Tibial artery (tissue), 4 donors: ENCODE measurements at regions of chr13 and their contacts with region 1.

Region 1: DNA sequence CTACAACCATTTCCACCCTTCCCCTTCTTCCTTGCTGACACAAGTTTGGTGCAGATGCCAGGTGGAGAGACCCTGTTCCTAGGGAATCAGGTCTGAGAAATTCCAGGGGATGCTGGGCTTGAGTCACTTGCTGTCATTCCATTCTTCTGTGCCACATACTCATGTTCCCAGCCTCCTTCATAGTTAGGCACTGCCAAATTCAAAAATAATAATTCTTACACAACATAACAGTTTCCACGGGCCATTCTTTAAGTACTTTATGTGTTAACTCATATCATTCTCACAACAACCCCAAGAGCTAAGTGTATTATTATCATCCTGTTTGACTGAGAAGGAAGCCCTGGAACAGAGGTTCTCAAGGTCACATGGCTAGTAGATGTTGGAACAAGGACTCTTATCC is 27.1 kb upstream of the POMP start:
- DNase-seq: no peak
- H3K4me3 ChIP-seq: no peak overlapping the region
- H3K27ac ChIP-seq: no peak overlapping the region
- H3K4me1 ChIP-seq: no peaks in the 10 kb centered on the region
- H3K27me3 ChIP-seq: no peaks in the 10 kb centered on the region
- CTCF ChIP-seq: no peak

Region 2: GRCh38 chr13:28318496-28318895 is 313.3 kb before region 1 on chr13:
- intact Hi-C with region 1: loop called (anchors 5 kb)
- DNase-seq: no peak
- H3K4me3 ChIP-seq: no peak overlapping the region
- H3K27ac ChIP-seq: no peak overlapping the region
- H3K4me1 ChIP-seq: no peaks in the 10 kb centered on the region
- H3K27me3 ChIP-seq: no peaks in the 10 kb centered on the region
- CTCF ChIP-seq: no peak

Region 3: DNA sequence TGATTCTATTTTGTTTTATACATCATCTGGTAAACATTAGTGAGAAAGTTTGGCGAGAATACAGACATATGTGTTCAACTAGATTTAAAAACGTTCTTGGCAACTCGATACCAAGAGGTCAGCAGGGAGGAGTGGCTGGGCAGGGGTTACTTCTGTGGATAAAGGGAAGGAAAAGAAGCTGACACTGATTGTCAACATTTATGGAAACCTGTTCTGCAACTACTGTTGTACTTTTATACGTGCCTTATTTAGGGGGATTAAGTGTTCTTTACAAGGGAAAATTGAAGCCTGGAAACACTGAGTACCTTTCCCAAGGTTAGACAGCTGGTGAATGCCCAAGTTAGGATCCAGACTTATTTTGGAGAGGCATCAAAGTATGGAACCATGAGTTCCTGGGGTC is 253.4 kb after region 1 on chr13:
- intact Hi-C with region 1: no loop called
- DNase-seq: no peak
- H3K4me3 ChIP-seq: no peak overlapping the region
- H3K27ac ChIP-seq: no peak overlapping the region
- H3K4me1 ChIP-seq: no peaks in the 10 kb centered on the region
- H3K27me3 ChIP-seq: no peaks in the 10 kb centered on the region
- CTCF ChIP-seq: no peak